GM18951 (cell line): ENCODE measurements at regions of chr15 and their contacts with region 1.

Region 1: DNA sequence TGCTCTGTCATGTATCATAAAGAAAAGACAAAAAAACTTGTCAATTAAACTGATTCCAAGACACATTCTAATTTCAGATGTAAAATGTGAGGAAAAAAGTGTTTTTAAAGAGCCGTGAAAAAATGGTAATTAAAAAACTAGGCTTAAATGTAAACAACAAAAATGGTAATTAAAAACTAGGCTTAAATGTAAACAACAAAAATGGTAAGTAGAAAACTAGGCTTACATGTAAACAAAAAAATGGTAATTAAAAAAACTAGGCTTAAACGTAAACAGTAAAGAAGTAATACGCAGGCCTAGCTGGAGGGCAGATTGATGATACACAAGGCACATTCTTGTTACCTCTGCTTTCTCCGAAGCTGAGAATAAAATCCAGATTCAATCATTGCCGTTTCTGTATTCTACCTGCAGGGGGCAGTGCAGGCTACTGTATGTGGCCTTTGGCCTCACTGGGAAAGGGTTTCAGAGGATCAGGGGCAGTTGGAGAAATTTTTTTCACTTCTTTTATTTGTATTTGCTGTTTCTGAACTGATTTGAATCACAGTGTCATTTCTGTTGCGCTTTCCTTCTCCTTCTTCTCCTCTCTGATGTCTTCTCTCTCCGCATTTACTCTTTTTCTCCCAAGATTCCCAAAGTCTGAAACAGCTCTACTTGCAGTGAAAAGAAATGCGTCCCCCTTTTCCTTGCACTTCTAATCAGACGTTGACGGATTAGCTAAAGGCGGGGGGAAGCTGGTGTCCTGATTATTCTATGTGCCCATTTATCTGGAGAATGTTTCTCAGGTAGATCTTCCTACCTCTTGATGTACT is 67.2 kb upstream of the MCTP2 start:
- POLR2A ChIP-seq: no peak

Region 2: DNA sequence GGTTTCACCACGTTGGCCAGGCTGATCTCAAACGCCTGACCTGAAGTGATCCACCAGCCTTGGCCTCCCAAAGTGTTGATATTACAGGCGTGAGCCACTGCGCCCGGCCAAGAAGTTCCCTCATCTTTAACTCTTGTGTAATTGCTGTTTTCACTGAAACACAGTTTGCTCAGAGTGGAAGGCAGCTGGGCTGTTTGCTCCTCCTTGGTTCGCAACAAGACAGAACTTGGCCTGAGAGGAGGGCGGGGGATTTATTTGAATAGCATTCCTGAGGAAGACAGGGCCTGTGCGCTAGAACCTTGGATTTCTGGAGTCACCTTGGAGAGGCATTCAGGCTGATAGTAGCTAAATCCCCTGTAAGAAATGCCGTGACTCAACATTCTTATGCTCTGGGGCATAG is 159.5 kb before region 1 on chr15:
- in situ Hi-C with region 1: no loop called
- POLR2A ChIP-seq: no peak

Region 3: DNA sequence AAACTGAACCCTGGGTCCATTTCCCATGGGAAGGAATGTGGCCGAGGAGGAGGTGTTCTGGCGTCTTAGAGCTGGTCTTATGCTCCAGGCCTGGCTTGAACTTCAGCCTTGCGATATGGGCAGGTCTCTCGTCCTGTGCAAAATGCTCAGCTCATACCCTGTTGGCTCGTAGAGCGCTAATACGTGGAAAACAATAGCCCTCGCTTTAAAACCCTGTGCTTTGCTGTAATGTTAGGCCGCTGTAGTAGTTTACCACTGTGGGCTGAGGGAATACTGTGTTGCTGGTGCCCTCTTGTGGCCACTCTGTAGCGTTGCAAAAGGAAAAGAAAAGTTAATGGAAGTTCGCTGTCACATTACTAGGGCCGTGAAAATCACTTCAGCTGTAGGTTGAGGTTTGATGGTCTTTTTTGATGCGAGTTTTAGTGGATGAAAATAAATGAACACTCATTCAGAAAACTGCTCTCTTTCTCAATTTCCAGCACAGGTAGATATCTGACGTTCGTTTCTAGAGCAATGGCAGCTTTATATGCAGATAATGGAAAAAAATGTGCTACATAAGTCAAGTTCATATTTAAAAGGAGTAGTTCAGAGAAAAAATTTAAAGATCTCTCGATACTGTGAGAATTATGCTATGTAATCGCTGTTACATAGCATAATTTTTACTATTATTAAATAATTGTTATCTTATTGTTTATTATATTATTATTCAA is 160.1 kb after region 1 on chr15:
- in situ Hi-C with region 1: loop called (anchors 5 kb)
- POLR2A ChIP-seq: no peak

Region 4: GRCh38 chr15:94478763-94479162 is 314.6 kb after region 1 on chr15:
- in situ Hi-C with region 1: loop called (anchors 25 kb)
- POLR2A ChIP-seq: no peak

Region 5: GRCh38 chr15:94620632-94621031 is 456.4 kb after region 1 on chr15:
- in situ Hi-C with region 1: no loop called
- POLR2A ChIP-seq: no peak